PC-9 (cell line): ENCODE measurements at regions of chr12 and their contacts with region 1.

Region 1: GRCh38 chr12:103956516-103957027 is 9.1 kb upstream of the TDG start:
- DNase-seq: peak; percentile 34 to 41
- H3K4me3 ChIP-seq: peak overlapping the region; percentile 97
- H3K27ac ChIP-seq: peak overlapping the region; percentile 75
- H3K4me1 ChIP-seq: peaks cover 22% of the 10 kb centered on the region
- H3K27me3 ChIP-seq: no peaks in the 10 kb centered on the region
- CTCF ChIP-seq: no peak

Region 2: GRCh38 chr12:102939670-102940222 is 1016.8 kb before region 1 on chr12:
- CTCF ChIA-PET with region 1: no interaction called
- POLR2A ChIA-PET with region 1: interaction called, 22 read pairs
- intact Hi-C with region 1: no loop called
- DNase-seq: no peak
- H3K4me3 ChIP-seq: no peak overlapping the region
- H3K27ac ChIP-seq: no peak overlapping the region
- H3K4me1 ChIP-seq: no peaks in the 10 kb centered on the region
- H3K27me3 ChIP-seq: no peaks in the 10 kb centered on the region
- CTCF ChIP-seq: no peak